GM12878 (cell line): ENCODE measurements at regions of chr2 and their contacts with region 1.

Region 1: DNA sequence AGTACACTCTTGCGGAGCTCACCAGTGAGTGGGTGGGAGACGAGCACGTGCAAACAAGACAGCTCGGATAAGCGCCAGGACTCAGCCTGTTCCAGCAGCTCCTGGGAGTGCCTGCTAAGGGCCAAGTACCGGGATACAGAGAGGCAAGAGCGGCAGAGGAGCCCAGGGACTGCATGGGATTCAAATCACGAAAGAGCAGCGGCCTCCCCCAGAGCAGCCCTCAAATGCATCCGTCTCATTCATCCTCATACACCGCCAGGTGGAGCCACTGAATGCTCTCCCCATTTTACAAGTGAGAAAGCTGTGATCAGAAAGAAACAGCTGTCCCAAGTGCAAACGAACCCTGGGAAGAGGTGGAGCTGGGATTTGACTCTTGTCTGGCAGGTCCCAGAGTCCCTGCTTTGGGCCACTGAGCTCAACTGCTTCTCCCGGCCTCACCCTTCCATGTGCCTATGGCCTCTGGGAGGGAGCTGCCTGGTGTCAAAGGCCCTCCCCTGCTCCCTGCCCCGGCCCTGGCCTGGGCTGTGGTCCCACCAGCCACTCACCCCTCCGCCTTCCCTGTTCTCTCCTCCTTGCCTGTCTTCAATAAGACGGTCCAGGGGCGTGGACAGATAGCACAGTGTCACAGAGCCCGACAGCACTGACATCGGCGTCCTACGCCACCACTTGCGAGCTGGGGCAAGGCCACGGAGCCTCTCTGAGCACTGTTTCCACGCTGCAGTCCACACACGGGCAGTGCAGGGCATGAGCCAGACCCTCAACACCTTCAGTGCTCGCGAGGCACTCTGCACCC is 72.8 kb upstream of the TAF1B start:
- DNase-seq: no peak
- ATAC-seq: peak; percentile 83
- H3K4me3 ChIP-seq: no peak overlapping the region
- H3K27ac ChIP-seq: no peak overlapping the region
- H3K4me1 ChIP-seq: peaks cover 6% of the 10 kb centered on the region; the same call in 1 of the 2 replicates
- H3K27me3 ChIP-seq: no peaks in the 10 kb centered on the region; a peak in 2 of 4 replicates
- CTCF ChIP-seq: peak; percentile 61 to 74 (median 73)
- EP300 ChIP-seq: no peak
- POLR2A ChIP-seq: no peak
- RAD21 ChIP-seq: peak; percentile 58

Region 2: GRCh38 chr2:9748577-9748976 is 21.9 kb before region 1 on chr2:
- CTCF ChIA-PET with region 1: interaction called, 11 read pairs
- POLR2A ChIA-PET with region 1: no interaction called
- RAD21 ChIA-PET with region 1: interaction called, 3 read pairs
- SMC1A ChIA-PET with region 1: interaction called, 3 read pairs
- in situ Hi-C with region 1: no loop called
- intact Hi-C with region 1: no loop called
- DNase-seq: no peak
- ATAC-seq: no peak
- H3K4me3 ChIP-seq: no peak overlapping the region
- H3K27ac ChIP-seq: no peak overlapping the region
- H3K4me1 ChIP-seq: peaks cover 33% of the 10 kb centered on the region
- H3K27me3 ChIP-seq: peaks cover 0 to 2% of the 10 kb centered on the region in 2 experiments; a peak in 3 of 4 replicates
- CTCF ChIP-seq: no peak
- EP300 ChIP-seq: no peak
- POLR2A ChIP-seq: no peak
- RAD21 ChIP-seq: no peak

Region 3: GRCh38 chr2:9757501-9758264 is 12.8 kb before region 1 on chr2:
- CTCF ChIA-PET with region 1: interaction called, 25 read pairs
- POLR2A ChIA-PET with region 1: no interaction called
- RAD21 ChIA-PET with region 1: interaction called, 3 read pairs
- SMC1A ChIA-PET with region 1: interaction called, 11 read pairs
- in situ Hi-C with region 1: no loop called
- intact Hi-C with region 1: no loop called
- DNase-seq: no peak
- ATAC-seq: no peak
- H3K4me3 ChIP-seq: no peak overlapping the region
- H3K27ac ChIP-seq: no peak overlapping the region
- H3K4me1 ChIP-seq: peaks cover 23% of the 10 kb centered on the region
- H3K27me3 ChIP-seq: peaks cover 4 to 15% of the 10 kb centered on the region in 2 experiments
- CTCF ChIP-seq: no peak
- EP300 ChIP-seq: no peak
- POLR2A ChIP-seq: no peak
- RAD21 ChIP-seq: no peak

Region 4: DNA sequence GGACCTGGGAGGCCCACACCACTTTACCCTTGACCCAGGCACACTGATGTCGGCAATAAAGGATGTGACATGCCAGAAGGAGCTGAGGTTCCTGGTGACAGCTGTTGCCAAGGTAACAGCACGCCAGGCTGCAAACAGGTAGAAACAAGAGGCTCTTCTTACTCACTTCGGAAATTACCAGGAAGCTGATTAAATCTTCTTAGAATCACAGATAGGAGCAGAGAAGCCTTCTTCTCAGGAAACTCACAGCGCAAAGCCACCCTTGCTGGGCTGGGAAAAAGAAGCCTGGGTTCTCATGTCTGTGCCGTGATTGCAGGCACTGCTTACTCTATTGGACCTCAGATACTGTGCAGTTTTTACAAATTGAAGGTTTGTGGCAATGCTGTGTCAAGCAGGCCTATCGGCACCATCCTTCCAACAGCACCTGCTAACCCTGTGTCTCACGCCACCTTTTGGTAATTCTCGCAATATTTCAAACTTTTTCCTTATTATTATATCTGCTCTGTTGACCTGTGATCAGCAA is 11.8 kb after region 1 on chr2:
- CTCF ChIA-PET with region 1: interaction called, 19 read pairs
- POLR2A ChIA-PET with region 1: no interaction called
- RAD21 ChIA-PET with region 1: interaction called, 3 read pairs
- SMC1A ChIA-PET with region 1: interaction called, 7 read pairs
- in situ Hi-C with region 1: no loop called
- intact Hi-C with region 1: no loop called
- DNase-seq: no peak
- ATAC-seq: peak; percentile 59
- H3K4me3 ChIP-seq: no peak overlapping the region
- H3K27ac ChIP-seq: no peak overlapping the region
- H3K4me1 ChIP-seq: peaks cover 8% of the 10 kb centered on the region
- H3K27me3 ChIP-seq: no peaks in the 10 kb centered on the region
- CTCF ChIP-seq: peak in 1 of 3 experiments; percentile 22; a peak in 1 of 6 replicates
- EP300 ChIP-seq: no peak
- POLR2A ChIP-seq: no peak
- RAD21 ChIP-seq: no peak

Region 5: GRCh38 chr2:9799665-9800632 is 29.4 kb after region 1 on chr2:
- CTCF ChIA-PET with region 1: interaction called, 71 read pairs
- POLR2A ChIA-PET with region 1: interaction called, 3 read pairs
- RAD21 ChIA-PET with region 1: interaction called, 43 read pairs
- SMC1A ChIA-PET with region 1: interaction called, 20 read pairs
- in situ Hi-C with region 1: no loop called
- intact Hi-C with region 1: no loop called
- DNase-seq: peak; percentile 47
- ATAC-seq: peak; percentile 93
- H3K4me3 ChIP-seq: no peak overlapping the region; the same call in 1 of the 2 replicates
- H3K27ac ChIP-seq: no peak overlapping the region
- H3K4me1 ChIP-seq: peaks cover 11% of the 10 kb centered on the region
- H3K27me3 ChIP-seq: no peaks in the 10 kb centered on the region; a peak in 1 of 4 replicates
- CTCF ChIP-seq: peak; percentile 97 to 100 (median 98)
- EP300 ChIP-seq: no peak
- POLR2A ChIP-seq: no peak
- RAD21 ChIP-seq: peak; percentile 84